Activated B cell treated with CpG ODN at 0.5 μM for 24 hours (primary cell): ENCODE measurements at regions of chr12 and their contacts with region 1.

Region 1: DNA sequence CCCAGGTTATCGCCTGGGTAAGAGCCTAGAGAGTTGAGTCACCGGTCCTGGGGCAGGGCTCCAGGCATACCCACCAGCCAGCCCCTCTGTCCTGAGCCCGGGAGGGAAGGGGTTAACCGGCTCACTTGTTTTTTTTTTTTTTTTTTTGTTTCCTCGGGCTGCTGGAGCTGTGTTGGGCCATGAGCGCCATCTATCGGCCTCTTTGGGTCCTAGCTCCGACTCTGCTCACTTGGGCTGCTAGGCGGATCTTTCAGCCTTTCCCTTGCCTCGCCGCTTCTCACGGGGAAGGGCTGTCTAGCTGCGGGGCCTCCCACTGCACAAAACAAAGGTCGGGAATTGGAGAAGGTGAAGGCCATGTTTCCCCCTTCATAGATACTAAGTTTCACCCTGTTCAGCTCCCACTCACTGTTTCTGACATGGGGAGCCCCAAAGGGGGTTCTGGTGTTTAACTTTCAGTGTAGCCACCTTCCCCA is 2.8 kb upstream of the SMUG1 start:
- DNase-seq: peak; percentile 58
- ATAC-seq: peak; percentile 61
- H3K4me3 Mint-ChIP-seq: no peak overlapping the region
- H3K27ac Mint-ChIP-seq: no peak overlapping the region
- H3K4me1 Mint-ChIP-seq: peaks cover 29% of the 10 kb centered on the region
- H3K27me3 Mint-ChIP-seq: peaks cover 20% of the 10 kb centered on the region
- CTCF ChIP-seq: no peak

Region 2: DNA sequence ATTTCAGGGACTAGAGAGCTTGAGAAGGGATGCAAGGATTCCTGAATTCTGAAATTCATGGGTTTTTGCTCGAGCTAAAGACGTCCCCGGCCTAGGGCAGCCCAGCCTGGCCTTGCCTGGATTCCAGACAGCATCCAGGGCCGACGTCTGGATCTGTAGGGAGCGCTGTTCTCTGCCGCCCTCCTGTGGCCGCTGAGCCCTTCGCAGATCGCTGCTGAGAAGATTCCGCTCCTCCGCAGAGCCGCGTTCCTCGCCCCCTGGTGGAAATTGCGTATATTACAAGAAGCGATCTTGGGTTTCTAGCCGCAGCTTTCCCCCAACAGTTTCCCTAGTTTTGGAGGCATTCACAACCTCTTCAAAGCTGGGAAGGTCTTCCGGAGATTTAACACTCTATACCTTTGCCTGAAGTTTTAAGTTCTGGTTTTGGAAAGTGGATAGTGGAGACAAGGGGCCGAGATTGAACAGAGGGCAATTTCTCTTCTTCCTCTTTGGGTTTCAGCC is 444.9 kb before region 1 on chr12:
- CTCF ChIA-PET with region 1: interaction called, 5 read pairs
- POLR2A ChIA-PET with region 1: no interaction called
- intact Hi-C with region 1: loop called (anchors 5 kb)
- DNase-seq: peak; percentile 70
- ATAC-seq: peak; percentile 75
- H3K4me3 Mint-ChIP-seq: peak overlapping the region; percentile 44
- H3K27ac Mint-ChIP-seq: peak overlapping the region; percentile 57
- H3K4me1 Mint-ChIP-seq: peaks cover 18% of the 10 kb centered on the region
- H3K27me3 Mint-ChIP-seq: peaks cover 40% of the 10 kb centered on the region
- CTCF ChIP-seq: peak; percentile 100

Region 3: DNA sequence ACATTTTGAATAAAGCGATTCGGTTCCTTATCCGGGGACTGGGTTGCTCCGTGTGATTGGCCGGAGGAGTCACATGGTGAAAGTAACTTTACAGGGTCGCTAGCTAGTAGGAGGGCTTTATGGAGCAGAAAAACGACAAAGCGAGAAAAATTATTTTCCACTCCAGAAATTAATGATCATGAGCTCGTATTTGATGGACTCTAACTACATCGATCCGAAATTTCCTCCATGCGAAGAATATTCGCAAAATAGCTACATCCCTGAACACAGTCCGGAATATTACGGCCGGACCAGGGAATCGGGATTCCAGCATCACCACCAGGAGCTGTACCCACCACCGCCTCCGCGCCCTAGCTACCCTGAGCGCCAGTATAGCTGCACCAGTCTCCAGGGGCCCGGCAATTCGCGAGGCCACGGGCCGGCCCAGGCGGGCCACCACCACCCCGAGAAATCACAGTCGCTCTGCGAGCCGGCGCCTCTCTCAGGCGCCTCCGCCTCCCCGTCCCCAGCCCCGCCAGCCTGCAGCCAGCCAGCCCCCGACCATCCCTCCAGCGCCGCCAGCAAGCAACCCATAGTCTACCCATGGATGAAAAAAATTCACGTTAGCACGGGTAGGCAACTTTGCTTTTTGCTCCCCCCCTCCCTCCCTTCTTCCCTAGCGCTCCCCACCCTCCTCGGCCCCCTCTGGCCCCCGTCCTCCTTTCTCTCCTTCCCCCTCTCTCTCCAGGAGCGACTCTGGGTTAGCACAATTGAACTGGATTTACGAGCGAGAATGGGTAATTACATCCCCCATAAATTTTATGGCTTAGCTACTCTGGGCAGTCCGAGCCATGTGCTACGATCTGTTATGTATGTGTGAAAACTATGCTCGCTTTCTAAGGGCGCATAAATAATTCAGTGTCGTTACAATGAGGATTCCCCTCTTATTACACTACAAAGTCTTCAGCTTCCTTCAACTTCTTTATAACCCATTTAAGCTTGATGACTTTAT is 137.5 kb before region 1 on chr12 and contains the start of gene HOXC4:
- CTCF ChIA-PET with region 1: interaction called, 6 read pairs
- POLR2A ChIA-PET with region 1: interaction called, 29 read pairs
- intact Hi-C with region 1: loop called (anchors 1 kb)
- DNase-seq: no peak
- ATAC-seq: peak; percentile 75
- H3K4me3 Mint-ChIP-seq: peak within 1 kb of the TSS; percentile 88
- H3K27ac Mint-ChIP-seq: peak within 1 kb of the TSS; percentile 89
- H3K4me1 Mint-ChIP-seq: peaks cover 50% of the 10 kb centered on the region
- H3K27me3 Mint-ChIP-seq: peaks cover 25% of the 10 kb centered on the region
- CTCF ChIP-seq: no peak
- total RNA-seq, gene HOXC4: 4.3 and 4.8 TPM in 2 replicates

Region 4: DNA sequence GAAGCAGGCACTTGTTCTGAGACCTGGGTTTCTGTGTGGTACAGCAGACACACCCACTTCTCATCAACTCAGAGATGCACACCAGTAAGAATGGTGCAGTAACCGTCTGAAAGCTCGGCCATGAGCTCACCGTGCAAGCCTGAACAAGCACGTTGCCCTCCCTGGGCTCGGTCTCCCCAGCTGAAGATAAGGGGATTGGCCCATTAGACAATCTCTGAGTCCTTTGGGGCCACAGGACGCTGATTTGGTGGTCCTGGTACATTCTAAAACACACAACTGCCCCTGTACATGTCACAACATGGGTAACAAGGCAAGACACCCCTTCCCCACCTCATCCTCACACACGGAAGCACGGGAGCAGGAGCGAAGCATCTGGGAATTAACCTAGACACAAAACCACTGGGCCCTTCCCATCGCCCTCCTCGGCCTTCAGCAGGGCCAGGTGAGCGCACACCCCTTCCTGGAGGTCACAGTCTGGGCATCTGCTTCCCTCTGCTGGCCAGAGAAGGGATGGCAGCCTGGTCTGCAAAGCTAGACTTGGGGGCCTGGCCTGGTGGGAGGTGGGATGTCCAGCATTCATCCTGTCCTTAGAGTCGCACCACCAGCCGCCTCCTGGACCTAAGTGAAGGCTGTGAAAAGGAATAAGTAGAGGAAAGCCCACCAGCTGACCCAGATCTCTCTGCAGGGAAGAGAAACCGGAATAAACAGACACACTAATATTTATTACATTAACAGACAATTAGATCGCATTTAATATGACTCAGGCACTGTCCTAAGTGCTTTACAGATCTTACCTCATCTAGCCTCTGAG is 16.1 kb after region 1 on chr12:
- CTCF ChIA-PET with region 1: interaction called, 55 read pairs
- POLR2A ChIA-PET with region 1: interaction called, 5 read pairs
- intact Hi-C with region 1: loop called (anchors 1 kb)
- DNase-seq: peak; percentile 79
- ATAC-seq: peak; percentile 100
- H3K4me3 Mint-ChIP-seq: no peak overlapping the region
- H3K27ac Mint-ChIP-seq: peak overlapping the region; percentile 30
- H3K4me1 Mint-ChIP-seq: peaks cover 4% of the 10 kb centered on the region
- H3K27me3 Mint-ChIP-seq: peaks cover 35% of the 10 kb centered on the region
- CTCF ChIP-seq: no peak

Region 5: DNA sequence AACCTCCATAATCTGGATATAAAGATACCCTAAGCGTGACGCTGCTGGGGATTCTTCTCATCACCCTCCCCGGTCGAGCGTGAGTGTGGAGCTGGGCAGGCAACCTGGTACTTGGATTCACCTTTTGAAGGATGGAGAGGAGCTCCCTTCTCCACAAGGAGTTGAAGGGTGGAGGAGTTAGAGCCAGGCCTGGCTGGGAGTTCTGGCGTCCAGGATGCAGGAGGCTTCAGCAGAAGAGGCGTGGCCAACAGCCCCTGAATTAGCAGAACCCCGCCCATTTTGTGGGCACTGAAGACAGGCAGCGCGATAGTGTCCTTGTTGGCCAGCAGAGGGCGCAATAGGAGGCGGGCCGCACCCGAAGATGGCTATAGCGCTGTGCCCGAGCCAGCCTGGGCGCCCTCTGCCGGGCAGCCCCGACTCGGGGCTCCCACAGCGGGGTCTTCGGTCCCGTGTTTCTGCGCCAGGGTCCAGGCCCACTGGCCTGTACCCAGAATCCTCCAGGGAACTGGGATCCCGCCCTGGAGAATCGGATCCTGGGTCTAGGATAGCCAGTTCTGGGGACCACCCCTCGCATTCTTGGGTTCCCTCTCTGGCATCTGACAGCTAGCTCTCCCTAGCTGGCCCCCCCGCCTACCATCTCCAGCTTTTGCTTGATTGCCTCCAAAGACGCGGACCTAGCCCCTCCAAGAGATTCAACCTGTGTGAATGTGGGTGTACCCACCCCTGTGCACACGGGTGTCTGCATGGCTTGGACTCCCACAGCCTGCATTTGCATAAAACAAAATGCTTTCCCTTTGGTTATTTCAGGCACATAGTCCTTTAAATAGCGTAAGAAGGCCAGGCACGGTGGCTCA is 23.2 kb after region 1 on chr12:
- CTCF ChIA-PET with region 1: interaction called, 5 read pairs
- POLR2A ChIA-PET with region 1: interaction called, 6 read pairs
- intact Hi-C with region 1: loop called (anchors 2 kb)
- DNase-seq: peak; percentile 87
- ATAC-seq: peak; percentile 85
- H3K4me3 Mint-ChIP-seq: peak overlapping the region; percentile 83
- H3K27ac Mint-ChIP-seq: no peak overlapping the region
- H3K4me1 Mint-ChIP-seq: peaks cover 45% of the 10 kb centered on the region
- H3K27me3 Mint-ChIP-seq: peaks cover 5% of the 10 kb centered on the region
- CTCF ChIP-seq: peak; percentile 97